ENCODE measurements at regions of chr6 and their contacts with region 1.

Region 1: GRCh38 chr6:57172136-57173055 is at the start of gene BAG2:
- DNase-seq: peak; percentile 96
- H3K4me3 ChIP-seq: peak within 1 kb of the TSS; percentile 88
- H3K27ac ChIP-seq: peak within 1 kb of the TSS; percentile 82
- H3K4me1 ChIP-seq: peaks cover 20% of the 10 kb centered on the region
- CTCF ChIP-seq: 0 out of 2 replicates have a peak, but pooled peaks have one; percentile 23
- total RNA-seq, gene BAG2: 6.8 and 7.7 TPM in 2 replicates

Region 2: DNA sequence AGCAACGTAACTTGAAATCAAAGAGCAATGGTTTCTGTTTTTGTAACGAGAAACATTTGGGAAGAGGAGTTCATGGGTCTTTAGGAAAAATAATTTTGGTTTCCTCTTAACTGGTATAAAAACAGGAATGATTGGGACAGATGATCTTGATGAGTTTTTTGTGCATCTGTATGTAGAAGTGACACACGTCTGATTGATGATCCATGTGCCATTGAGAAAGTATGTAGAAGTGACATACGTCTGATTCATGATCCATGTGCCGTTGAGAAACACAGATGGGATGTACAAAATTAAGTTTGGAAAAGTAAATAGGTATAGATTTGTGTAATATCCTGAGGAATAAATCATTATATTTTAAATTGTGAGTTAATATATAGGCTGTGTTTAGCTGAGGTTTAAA is 123.8 kb before region 1 on chr6:
- CTCF ChIA-PET with region 1: no interaction called
- POLR2A ChIA-PET with region 1: interaction called, 4 read pairs
- intact Hi-C with region 1: loop called (anchors 1 kb)
- DNase-seq: no peak
- H3K4me3 ChIP-seq: peak overlapping the region; percentile 64
- H3K27ac ChIP-seq: no peak overlapping the region
- H3K4me1 ChIP-seq: peaks cover 24% of the 10 kb centered on the region
- CTCF ChIP-seq: no peak

Region 3: GRCh38 chr6:57089687-57090460 is 82.5 kb before region 1 on chr6 and contains the start of gene ZNF451:
- CTCF ChIA-PET with region 1: no interaction called
- POLR2A ChIA-PET with region 1: interaction called, 8 read pairs
- intact Hi-C with region 1: loop called (anchors 1 kb)
- DNase-seq: peak; percentile 95
- H3K4me3 ChIP-seq: peak within 1 kb of the TSS; percentile 71
- H3K27ac ChIP-seq: peak within 1 kb of the TSS; percentile 62
- H3K4me1 ChIP-seq: peaks cover 33% of the 10 kb centered on the region
- CTCF ChIP-seq: no peak
- total RNA-seq, gene ZNF451: 35.1 and 50.0 TPM in 2 replicates

Region 4: GRCh38 chr6:57108691-57109090 is 63.7 kb before region 1 on chr6:
- CTCF ChIA-PET with region 1: no interaction called
- POLR2A ChIA-PET with region 1: interaction called, 3 read pairs
- intact Hi-C with region 1: loop called (anchors 5 kb)
- DNase-seq: peak; percentile 70
- H3K4me3 ChIP-seq: no peak overlapping the region
- H3K27ac ChIP-seq: peak overlapping the region; percentile 31
- H3K4me1 ChIP-seq: peaks cover 19% of the 10 kb centered on the region
- CTCF ChIP-seq: no peak

Region 5: DNA sequence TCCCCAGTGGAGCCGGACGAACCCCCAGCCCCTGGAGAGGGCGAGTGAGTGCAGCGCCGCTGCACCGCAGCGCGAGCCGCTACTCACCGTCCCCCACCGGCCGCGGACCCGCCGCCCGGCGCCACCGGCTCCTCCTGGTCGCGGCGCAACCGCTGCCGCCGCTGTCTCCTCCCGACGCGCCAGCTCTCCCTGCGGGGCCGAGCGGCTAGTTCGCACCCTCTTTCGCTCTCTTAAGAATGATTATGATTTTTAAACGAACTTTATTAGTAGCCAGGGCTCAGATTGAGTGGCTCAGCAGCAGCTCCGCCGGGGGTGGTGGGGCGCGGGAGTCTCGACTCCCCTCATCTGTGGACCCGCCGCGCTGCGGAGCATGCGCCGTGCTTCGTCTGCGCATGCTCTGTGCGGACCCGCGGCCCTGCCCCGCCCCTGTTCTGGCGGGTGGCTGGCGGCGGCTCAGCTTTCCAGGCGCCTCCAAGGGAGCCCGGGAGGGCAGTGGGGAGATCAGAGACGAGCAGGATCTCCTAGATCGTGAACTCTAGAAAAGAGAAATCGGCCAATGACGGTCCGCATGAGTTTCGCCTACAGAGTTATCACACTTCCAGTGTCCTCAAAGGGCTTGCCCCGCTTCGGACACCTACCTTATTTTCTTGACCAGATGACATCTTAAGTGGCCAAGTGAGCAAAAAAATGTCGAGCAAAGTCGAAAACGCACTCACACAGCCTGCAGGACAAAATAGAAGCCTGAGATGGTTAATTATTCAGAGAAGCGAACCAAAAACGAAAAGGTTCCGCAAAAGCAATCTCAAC is 49.7 kb after region 1 on chr6 and contains the start of gene RAB23:
- CTCF ChIA-PET with region 1: no interaction called
- POLR2A ChIA-PET with region 1: interaction called, 6 read pairs
- intact Hi-C with region 1: loop called (anchors 1 kb)
- DNase-seq: peak; percentile 85
- H3K4me3 ChIP-seq: peak within 1 kb of the TSS; percentile 87
- H3K27ac ChIP-seq: peak within 1 kb of the TSS; percentile 53
- H3K4me1 ChIP-seq: peaks cover 15% of the 10 kb centered on the region
- CTCF ChIP-seq: 0 out of 2 replicates have a peak, but pooled peaks have one; percentile 6
- total RNA-seq, gene RAB23: 3.5 and 4.9 TPM in 2 replicates